CD4-positive, alpha-beta T cell (primary cell): ENCODE measurements at regions of chr4 and their contacts with region 1.

Region 1: DNA sequence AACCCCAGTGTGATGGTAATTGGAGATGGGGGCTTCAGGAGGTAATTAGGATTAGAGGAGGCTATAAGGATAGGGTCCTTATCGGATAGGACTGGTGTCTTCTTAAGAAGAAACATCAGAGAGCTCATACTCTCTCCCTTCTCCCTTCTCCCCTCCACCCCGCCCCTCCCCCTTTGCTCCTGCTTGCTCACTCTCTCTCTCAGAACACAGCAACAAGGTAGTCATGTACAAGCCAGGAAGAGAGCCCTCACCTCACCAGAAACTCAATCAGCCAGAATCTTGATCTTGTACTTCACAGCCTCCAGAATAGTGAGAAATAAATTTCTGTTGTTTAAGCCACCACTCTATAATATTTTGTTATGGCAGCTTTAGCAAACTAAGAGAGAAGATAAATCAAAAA is 4.5 kb downstream of the DDX60L start:
- DNase-seq: peak in 5 of 14 experiments; percentile 4 to 49 (median 19)
- ATAC-seq: no peak
- H3K4me3 ChIP-seq: no peak overlapping the region
- H3K4me3 Mint-ChIP-seq: no peak overlapping the region
- H3K27ac ChIP-seq: no peak overlapping the region
- H3K27ac Mint-ChIP-seq: peak overlapping the region; percentile 56
- H3K4me1 ChIP-seq: peaks cover 16% of the 10 kb centered on the region
- H3K4me1 Mint-ChIP-seq: peaks cover 74% of the 10 kb centered on the region
- H3K27me3 ChIP-seq: no peaks in the 10 kb centered on the region
- H3K27me3 Mint-ChIP-seq: no peaks in the 10 kb centered on the region
- CTCF ChIP-seq: no peak

Region 2: DNA sequence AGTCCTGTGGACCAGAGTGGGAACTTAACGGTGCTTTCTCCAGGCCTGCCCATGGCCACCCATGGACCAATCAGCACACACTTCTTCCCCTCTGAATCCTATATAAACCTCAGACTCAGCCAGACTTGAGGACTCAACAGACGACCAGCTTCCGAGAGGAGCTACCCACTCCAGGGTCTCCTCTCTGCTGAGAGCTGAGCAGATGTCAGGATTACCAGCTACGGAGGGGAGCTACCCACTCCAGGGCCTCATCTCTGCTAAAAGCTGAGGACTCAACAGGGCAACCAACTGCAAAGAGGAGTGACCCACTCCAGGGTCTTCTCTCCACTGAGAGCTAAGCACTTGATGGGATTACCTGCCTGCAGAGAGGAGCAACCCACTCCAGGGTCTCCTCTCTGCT is 77.2 kb before region 1 on chr4:
- CTCF ChIA-PET with region 1: no interaction called
- POLR2A ChIA-PET with region 1: no interaction called
- intact Hi-C with region 1: no loop called
- DNase-seq: no peak
- ATAC-seq: no peak
- H3K4me3 ChIP-seq: no peak overlapping the region
- H3K4me3 Mint-ChIP-seq: no peak overlapping the region
- H3K27ac ChIP-seq: no peak overlapping the region
- H3K27ac Mint-ChIP-seq: no peak overlapping the region
- H3K4me1 ChIP-seq: no peaks in the 10 kb centered on the region
- H3K4me1 Mint-ChIP-seq: no peaks in the 10 kb centered on the region
- H3K27me3 ChIP-seq: no peaks in the 10 kb centered on the region
- H3K27me3 Mint-ChIP-seq: no peaks in the 10 kb centered on the region
- CTCF ChIP-seq: no peak

Region 3: DNA sequence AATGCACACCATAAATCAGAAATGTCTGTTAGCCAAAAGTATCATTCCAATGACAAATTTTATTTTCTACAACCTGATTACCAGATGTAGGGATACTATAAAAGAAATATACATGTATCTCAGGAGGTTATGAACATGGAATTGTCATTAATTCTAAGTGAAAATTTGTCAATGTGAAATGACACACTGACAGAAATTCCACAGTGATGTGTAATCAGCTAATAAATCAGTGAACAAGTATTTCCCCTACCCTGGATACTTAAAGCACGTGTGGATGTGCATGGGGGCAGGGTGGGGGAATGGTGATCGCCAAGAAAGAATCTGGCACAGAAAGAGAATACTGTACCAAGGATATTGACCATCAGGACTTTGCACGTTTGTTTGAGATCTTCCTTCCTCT is 671.4 kb after region 1 on chr4:
- CTCF ChIA-PET with region 1: no interaction called
- POLR2A ChIA-PET with region 1: no interaction called
- intact Hi-C with region 1: no loop called
- DNase-seq: no peak
- ATAC-seq: no peak
- H3K4me3 ChIP-seq: no peak overlapping the region
- H3K4me3 Mint-ChIP-seq: no peak overlapping the region
- H3K27ac ChIP-seq: no peak overlapping the region
- H3K27ac Mint-ChIP-seq: no peak overlapping the region
- H3K4me1 ChIP-seq: no peaks in the 10 kb centered on the region
- H3K4me1 Mint-ChIP-seq: no peaks in the 10 kb centered on the region
- H3K27me3 ChIP-seq: no peaks in the 10 kb centered on the region
- H3K27me3 Mint-ChIP-seq: no peaks in the 10 kb centered on the region
- CTCF ChIP-seq: no peak

Region 4: GRCh38 chr4:169619959-169620879 is 1144.5 kb after region 1 on chr4 and contains the start of gene CLCN3:
- CTCF ChIA-PET with region 1: no interaction called
- POLR2A ChIA-PET with region 1: no interaction called
- intact Hi-C with region 1: loop called in 1 of 2 experiments (anchors 5 kb)
- DNase-seq: peak; percentile 72 to 94 (median 87)
- ATAC-seq: peak; percentile 65
- H3K4me3 ChIP-seq: peak within 1 kb of the TSS; percentile 91
- H3K4me3 Mint-ChIP-seq: peak within 1 kb of the TSS; percentile 98
- H3K27ac ChIP-seq: peak within 1 kb of the TSS; percentile 94 to 96
- H3K27ac Mint-ChIP-seq: peak within 1 kb of the TSS; percentile 98
- H3K4me1 ChIP-seq: peaks cover 19% of the 10 kb centered on the region
- H3K4me1 Mint-ChIP-seq: peaks cover 74% of the 10 kb centered on the region
- H3K27me3 ChIP-seq: no peaks in the 10 kb centered on the region
- H3K27me3 Mint-ChIP-seq: no peaks in the 10 kb centered on the region
- CTCF ChIP-seq: no peak
- total RNA-seq, gene CLCN3: 9.0 to 9.2 TPM